ENCODE measurements at regions of chr3 and their contacts with region 1.

Region 1: GRCh38 chr3:56702490-56703315 is 19.6 kb upstream of the TASOR start:
- DNase-seq: no peak
- ATAC-seq: peak in 1 of 2 donors; percentile 69
- H3K4me3 ChIP-seq: no peak overlapping the region
- H3K27ac ChIP-seq: no peak overlapping the region
- H3K4me1 ChIP-seq: no peaks in the 10 kb centered on the region
- H3K27me3 ChIP-seq: no peaks in the 10 kb centered on the region

Region 2: DNA sequence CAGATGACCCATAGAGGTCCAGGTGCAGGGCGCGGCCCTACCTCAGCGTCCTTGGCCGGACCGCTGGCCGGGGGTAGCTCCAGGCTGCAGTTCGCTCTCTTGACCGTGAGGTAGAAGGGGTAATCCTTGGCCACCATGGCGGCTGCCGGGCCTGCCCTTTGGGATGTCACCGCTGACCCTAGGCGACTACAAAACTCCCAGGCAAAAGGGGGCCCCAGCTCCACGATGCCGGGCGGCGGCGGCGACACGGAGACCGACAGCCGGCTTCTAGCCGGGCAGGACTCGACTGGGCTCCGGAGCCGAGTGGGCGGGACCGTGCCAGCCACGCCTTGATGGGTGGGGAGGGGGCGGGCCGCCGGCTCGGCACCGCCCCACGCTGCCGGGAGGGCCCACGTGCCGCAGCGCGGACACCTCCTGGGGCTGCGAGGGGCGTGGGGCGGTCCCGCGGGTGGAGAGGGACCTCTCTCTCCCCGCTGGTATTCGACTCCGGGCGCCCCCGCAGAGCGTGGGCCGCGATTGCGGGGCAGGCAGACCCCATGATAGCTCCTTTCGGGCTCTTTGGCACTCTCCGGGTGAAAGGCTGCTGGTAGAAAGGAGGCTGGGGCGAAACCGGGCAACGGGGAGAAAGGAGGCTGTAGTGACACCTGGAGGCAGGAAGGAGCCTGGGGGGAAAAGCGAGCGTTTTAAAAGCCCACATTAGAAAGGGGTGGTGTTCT is 99.1 kb after region 1 on chr3 and contains the start of gene ARHGEF3:
- intact Hi-C with region 1: loop called (anchors 2 to 5 kb)
- DNase-seq: peak; percentile 87 to 95 (median 95)
- ATAC-seq: peak; percentile 98 to 99
- H3K4me3 ChIP-seq: peak within 1 kb of the TSS; percentile 71
- H3K27ac ChIP-seq: peak within 1 kb of the TSS; percentile 4
- H3K4me1 ChIP-seq: peaks cover 4% of the 10 kb centered on the region
- H3K27me3 ChIP-seq: no peaks in the 10 kb centered on the region
- total RNA-seq, gene ARHGEF3: 10.0 to 11.4 (median 11.2) TPM

Measured in right cardiac atrium (tissue), 5 donors.